GM12878 (cell line): ENCODE measurements at regions of chr14 and their contacts with region 1.

Region 1: DNA sequence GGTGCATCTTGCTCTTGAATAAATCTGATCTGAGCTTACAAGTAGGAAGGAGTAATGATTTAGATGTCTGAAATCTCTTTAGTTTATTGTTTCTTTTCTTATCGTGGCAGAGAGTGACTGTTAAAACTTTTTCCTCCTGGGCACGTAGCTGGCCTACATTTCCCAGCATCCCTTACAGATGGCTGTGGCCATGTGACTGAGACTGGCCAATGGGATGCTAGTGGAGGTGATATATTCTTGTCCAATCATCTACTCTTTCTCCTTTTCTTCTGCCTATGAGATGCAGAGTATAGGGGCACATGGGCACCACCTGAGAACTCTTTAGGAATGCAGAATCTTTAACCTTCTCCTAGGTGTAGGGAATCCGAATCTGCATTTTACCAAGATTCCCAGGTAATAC is 237.3 kb downstream of the RGS6 start:
- DNase-seq: no peak
- ATAC-seq: peak; percentile 49
- H3K4me3 ChIP-seq: no peak overlapping the region
- H3K27ac ChIP-seq: no peak overlapping the region
- H3K4me1 ChIP-seq: no peaks in the 10 kb centered on the region
- H3K27me3 ChIP-seq: no peaks in the 10 kb centered on the region
- CTCF ChIP-seq: no peak
- EP300 ChIP-seq: no peak
- POLR2A ChIP-seq: no peak
- RAD21 ChIP-seq: no peak

Region 2: GRCh38 chr14:72154723-72155633 is 14.5 kb before region 1 on chr14:
- CTCF ChIA-PET with region 1: interaction called, 10 read pairs
- POLR2A ChIA-PET with region 1: interaction called, 4 read pairs
- RAD21 ChIA-PET with region 1: interaction called, 14 read pairs
- SMC1A ChIA-PET with region 1: interaction called, 9 read pairs
- in situ Hi-C with region 1: no loop called
- intact Hi-C with region 1: no loop called
- DNase-seq: peak; percentile 34
- ATAC-seq: peak; percentile 90
- H3K4me3 ChIP-seq: no peak overlapping the region
- H3K27ac ChIP-seq: no peak overlapping the region
- H3K4me1 ChIP-seq: no peaks in the 10 kb centered on the region
- H3K27me3 ChIP-seq: no peaks in the 10 kb centered on the region
- CTCF ChIP-seq: no peak
- EP300 ChIP-seq: peak; percentile 76 to 97
- POLR2A ChIP-seq: no peak
- RAD21 ChIP-seq: peak; percentile 14; the same call in 1 of the 2 replicates

Region 3: DNA sequence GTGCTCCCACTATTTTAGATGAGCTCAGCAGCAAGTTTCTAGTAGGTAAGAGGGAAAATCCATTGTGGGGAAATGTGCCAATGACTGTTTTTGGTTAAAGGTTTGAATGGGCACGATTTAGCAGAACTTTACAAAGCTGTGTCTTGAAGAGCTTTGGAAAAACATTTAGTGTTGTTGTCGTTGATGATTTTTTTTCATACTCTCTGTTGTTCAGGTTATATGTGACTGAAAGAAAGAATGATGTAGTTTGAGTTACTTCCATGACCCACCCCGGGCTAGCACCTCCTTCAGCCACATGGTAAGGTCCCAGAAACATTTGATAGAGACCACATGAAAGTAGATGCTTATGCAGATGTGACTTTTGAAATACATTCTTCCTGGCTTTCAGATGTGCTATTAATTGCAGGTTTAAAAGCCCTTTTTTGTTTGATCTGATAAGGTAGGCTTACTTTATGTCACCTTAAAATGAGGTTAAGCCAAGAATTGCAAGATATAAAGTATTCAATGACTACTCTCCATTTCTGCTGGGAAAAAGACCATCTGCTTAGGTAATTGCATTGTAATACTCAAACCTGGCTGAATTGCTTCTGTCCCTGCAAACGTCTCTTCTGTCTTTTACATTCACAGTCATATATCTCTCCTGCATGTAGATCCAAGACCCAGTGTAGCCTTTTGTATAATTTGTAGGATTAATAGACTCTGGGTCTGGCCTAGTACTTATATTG is 13.3 kb after region 1 on chr14:
- CTCF ChIA-PET with region 1: interaction called, 5 read pairs
- POLR2A ChIA-PET with region 1: no interaction called
- RAD21 ChIA-PET with region 1: interaction called, 12 read pairs
- SMC1A ChIA-PET with region 1: interaction called, 38 read pairs
- in situ Hi-C with region 1: no loop called
- intact Hi-C with region 1: no loop called
- DNase-seq: no peak
- ATAC-seq: peak; percentile 87
- H3K4me3 ChIP-seq: no peak overlapping the region
- H3K27ac ChIP-seq: no peak overlapping the region
- H3K4me1 ChIP-seq: no peaks in the 10 kb centered on the region
- H3K27me3 ChIP-seq: no peaks in the 10 kb centered on the region
- CTCF ChIP-seq: no peak
- EP300 ChIP-seq: no peak; a peak in 1 of 4 replicates
- POLR2A ChIP-seq: no peak
- RAD21 ChIP-seq: no peak